ENCODE measurements at regions of chr16 and their contacts with region 1.

Region 1: DNA sequence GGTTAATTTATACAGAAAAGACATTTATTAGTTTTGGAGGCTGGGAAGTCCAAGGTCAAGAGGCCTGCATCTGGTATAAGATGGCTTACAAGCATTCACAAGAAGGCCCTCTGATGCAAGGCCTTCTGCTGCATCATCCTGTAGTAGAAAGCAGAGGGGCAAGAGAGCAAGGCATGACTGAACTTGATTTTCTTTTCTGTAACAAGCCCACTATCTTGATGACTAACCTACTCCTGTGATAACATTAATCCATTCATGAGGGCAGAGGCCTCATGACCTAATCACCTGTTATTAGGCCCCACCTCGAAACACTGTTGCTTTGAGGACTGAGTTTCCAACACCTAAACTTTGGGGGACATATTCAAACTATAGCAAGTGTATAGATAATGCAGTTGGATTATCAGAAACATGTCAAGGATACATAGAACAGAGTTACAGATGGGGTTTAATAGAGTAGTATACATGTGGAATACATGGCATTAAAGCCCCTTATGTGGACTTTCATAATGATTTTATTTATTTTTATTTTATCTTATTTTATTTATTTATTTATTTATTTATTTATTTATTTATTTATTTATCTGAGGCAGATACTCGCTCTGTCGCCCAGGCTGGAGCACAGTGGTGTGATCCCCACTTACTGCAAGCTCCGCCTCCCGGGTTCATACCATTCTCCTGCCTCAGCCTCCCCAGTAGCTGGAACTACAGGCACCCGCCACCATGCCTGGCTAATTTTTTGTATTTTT is 88.2 kb downstream of the CHD9 start:
- DNase-seq: no peak
- H3K4me3 ChIP-seq: no peak overlapping the region
- H3K27me3 ChIP-seq: no peaks in the 10 kb centered on the region
- CTCF ChIP-seq: no peak

Region 2: DNA sequence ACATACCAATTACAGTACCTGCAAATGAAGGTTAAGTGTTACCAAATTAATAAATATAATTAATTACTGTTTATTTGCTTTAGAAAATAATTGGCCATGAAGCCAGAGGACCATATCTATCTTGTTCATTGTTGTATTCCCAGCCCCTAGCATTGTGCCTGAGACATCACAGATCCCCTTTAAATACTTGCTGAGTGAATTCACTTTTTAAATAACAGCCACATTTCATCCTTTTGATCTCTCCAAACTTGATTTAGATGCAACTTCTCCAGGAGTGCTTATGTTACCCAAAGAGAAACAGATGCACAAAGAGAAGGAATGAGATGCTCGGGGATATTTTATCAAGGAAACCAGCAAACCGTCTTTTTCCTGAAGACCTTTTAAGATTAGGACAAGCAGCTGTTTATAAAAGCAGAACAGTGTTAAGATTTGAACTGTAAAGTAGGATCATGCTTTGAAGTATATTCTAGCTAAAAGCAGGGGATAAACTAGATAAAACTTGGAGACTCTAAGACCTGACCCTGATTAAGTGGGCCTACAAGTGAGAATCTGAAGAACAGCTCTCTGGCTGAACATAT is 21.9 kb before region 1 on chr16:
- CTCF ChIA-PET with region 1: no interaction called
- POLR2A ChIA-PET with region 1: interaction called, 12 read pairs
- DNase-seq: no peak
- H3K4me3 ChIP-seq: no peak overlapping the region
- H3K27me3 ChIP-seq: no peaks in the 10 kb centered on the region
- CTCF ChIP-seq: no peak

Region 3: GRCh38 chr16:53159781-53160436 is 16.9 kb after region 1 on chr16:
- CTCF ChIA-PET with region 1: interaction called, 10 read pairs
- POLR2A ChIA-PET with region 1: no interaction called
- DNase-seq: no peak
- H3K4me3 ChIP-seq: no peak overlapping the region
- H3K27me3 ChIP-seq: no peaks in the 10 kb centered on the region
- CTCF ChIP-seq: peak; percentile 77

Region 4: GRCh38 chr16:53249331-53249730 is 106.3 kb after region 1 on chr16:
- CTCF ChIA-PET with region 1: no interaction called
- POLR2A ChIA-PET with region 1: no interaction called
- DNase-seq: no peak
- H3K4me3 ChIP-seq: no peak overlapping the region
- H3K27me3 ChIP-seq: no peaks in the 10 kb centered on the region
- CTCF ChIP-seq: no peak